Sigmoid colon (tissue), 7 donors: ENCODE measurements at regions of chr1 and their contacts with region 1.

Region 1: GRCh38 chr1:193121616-193122593 is at the start of gene CDC73:
- DNase-seq: peak; percentile 98
- H3K4me3 ChIP-seq: peak within 1 kb of the TSS; percentile 58 to 74 (median 68)
- H3K27ac ChIP-seq: peak within 1 kb of the TSS; percentile 87 to 98 (median 93)
- H3K4me1 ChIP-seq: peaks cover 0 to 42% (median 30%) of the 10 kb centered on the region in 4 donors
- H3K27me3 ChIP-seq: no peaks in the 10 kb centered on the region
- CTCF ChIP-seq: peak; percentile 82 to 99 (median 94)
- EP300 ChIP-seq: peak in 2 of 4 donors; percentile 47 to 49
- POLR2A ChIP-seq: peak; percentile 80
- total RNA-seq, gene CDC73: 45.7 to 72.4 (median 52.2) TPM

Region 2: DNA sequence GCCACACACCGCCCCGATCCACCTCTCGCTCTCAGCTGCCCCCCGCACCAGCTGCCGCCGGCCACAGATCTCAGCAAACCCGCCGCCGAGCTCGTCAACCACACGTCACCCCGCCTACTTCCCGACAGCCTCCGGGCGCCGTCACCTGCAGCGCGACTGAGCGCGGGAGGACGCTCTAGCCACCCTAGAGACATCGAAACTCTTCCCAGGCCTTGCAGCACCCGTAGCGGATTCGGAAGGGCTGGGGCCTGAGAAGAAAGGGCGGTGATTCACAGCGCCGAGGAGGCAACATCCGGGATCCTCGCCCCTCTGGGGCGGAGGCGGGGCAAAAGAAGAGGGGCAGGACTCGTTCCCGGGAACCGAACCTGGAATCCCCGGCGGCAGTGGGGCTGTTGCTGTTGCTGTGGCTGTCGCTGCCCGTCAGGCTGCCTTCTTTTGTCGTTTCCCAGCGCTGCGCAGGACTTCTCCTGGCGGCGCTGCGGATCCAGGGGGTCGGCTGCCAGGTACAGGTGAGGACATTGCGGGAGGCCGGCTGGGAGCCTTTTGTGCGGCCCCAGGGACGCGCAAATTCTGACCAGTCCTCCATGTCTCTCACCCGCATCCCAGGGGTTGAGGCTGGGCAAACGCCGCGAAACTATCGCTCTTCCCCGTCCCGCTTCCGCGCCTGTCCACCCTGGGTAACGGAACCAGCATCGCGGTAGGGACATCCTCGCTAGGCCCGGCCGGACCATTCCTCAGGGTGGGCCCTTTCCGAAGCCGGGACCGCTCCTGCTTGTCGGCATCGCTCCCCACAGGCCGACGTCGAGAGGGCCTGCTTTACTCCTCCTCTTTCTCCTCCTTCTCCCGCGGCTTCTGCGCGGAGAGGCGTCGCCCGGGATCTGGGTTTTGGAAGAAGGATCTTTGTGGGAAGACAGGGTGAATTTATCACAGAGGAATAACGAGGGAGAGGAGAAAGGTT is 62.4 kb before region 1 on chr1 and contains the starts of genes RO60 and UCHL5:
- intact Hi-C with region 1: loop called (anchors 1 kb)
- DNase-seq: peak; percentile 99
- H3K4me3 ChIP-seq: peak within 1 kb of the TSS; percentile 77 to 97 (median 84)
- H3K27ac ChIP-seq: peak within 1 kb of the TSS; percentile 96 to 99 (median 99)
- H3K4me1 ChIP-seq: peaks cover 0 to 48% (median 36%) of the 10 kb centered on the region in 4 donors
- H3K27me3 ChIP-seq: no peaks in the 10 kb centered on the region
- CTCF ChIP-seq: no peak
- EP300 ChIP-seq: peak in 2 of 4 donors; percentile 55 to 80
- POLR2A ChIP-seq: peak; percentile 78
- total RNA-seq, gene RO60: 94.6 to 128 (median 111) TPM
- total RNA-seq, gene UCHL5: 24.6 to 47.6 (median 36.8) TPM

Region 3: DNA sequence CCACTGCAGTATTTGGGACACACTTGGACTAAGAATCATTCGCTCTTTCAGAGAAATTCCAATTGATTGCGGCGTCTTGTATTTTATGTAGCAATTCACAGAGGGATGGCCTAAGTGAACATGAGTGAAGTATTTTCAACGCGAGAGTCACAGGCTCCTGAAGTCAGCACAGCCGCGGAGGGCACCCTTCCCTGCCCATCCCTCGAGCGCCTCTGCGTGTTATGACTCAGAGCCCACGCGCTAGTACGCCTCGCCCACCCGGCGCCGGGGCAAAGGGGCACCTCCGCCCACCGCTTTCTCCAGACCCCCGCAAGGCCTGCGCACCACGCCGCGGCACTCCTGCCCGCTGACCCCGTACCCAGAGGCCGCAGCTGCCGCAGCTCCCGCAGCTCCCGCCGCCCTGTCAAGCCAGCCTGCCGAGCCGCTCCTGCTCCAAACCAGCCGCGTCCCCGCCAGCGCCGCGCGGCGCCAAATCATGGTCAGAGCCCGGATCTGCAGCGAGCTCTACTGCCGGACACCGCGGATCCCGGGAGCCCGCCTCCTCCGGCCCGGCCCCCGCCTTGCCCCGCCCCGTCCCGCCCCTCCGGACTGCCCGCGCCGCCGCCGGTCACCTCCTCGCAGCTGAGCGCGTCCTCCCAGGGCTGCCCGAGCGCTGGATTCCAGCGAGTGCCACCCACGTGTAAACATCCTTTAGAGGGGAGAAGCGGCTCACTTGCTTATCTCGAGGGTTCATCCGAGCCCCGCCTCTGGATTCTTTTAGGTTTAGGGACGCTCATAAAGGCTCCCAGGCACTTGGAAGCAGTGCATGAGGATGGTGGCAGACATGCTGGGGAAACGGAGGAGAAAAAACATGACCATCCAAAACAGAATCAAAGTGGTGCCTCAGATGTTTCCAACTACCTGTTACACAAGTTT is 16.7 kb before region 1 on chr1 and contains the start of gene GLRX2:
- intact Hi-C with region 1: loop called (anchors 1 kb)
- DNase-seq: peak; percentile 93
- H3K4me3 ChIP-seq: peak within 1 kb of the TSS; percentile 74 to 96 (median 84)
- H3K27ac ChIP-seq: peak within 1 kb of the TSS; percentile 95 to 97 (median 96)
- H3K4me1 ChIP-seq: peaks cover 0 to 25% (median 15%) of the 10 kb centered on the region in 4 donors
- H3K27me3 ChIP-seq: no peaks in the 10 kb centered on the region
- CTCF ChIP-seq: peak in 1 of 4 experiments; percentile 5
- EP300 ChIP-seq: no peak
- POLR2A ChIP-seq: peak; percentile 53 to 63
- total RNA-seq, gene GLRX2: 4.2 to 9.2 (median 7.1) TPM